MCF 10A (cell line): ENCODE measurements at regions of chr2 and their contacts with region 1.

Region 1: GRCh38 chr2:12716282-12717190 is at the start of gene TRIB2:
- DNase-seq: peak; percentile 82
- H3K4me3 Mint-ChIP-seq: peak within 1 kb of the TSS; percentile 95
- H3K27ac Mint-ChIP-seq: peak within 1 kb of the TSS; percentile 85
- H3K4me1 Mint-ChIP-seq: peaks cover 47% of the 10 kb centered on the region
- H3K27me3 Mint-ChIP-seq: no peaks in the 10 kb centered on the region
- CTCF ChIP-seq: no peak
- total RNA-seq, gene TRIB2: 12.9 and 14.3 TPM in 2 replicates

Region 2: DNA sequence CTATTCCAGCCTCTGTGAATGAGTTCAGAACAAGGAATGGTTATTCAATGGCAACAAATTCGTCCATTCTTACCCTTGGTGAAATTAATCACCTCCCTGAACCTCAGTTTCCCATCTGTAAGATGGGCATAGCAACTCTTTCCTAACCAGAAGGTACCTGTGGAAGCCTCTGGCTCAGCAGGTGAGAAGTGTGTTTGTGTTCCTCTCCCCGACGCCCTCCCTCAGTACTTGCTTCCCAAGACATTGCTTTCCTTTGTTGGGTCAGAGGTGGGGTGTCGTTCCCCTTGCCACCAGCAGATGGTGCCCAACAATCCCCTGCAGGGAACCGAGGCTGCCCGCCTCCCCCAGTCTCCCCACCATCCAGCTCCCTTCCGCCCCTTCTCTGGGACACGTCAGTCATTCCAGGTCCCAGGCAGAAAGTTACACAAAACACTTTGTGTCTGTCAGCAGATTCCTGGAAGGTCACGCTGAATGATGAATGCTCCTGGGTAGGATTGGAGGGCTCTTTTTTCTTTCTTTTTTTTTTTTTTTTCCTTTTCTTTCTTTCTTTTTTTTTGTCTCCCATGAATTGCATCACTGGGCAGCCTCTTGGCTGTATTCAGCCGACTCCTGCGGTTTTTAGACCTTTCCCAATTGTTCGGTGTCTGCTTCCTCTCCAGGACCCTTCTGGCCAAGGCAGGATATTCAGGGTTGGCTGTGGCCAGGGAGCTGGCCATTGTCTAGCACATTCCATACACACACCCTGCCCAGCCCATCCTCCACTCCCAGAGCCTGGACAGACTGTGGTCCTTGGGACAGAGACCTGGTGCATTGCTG is 852.8 kb before region 1 on chr2:
- CTCF ChIA-PET with region 1: interaction called, 42 read pairs
- POLR2A ChIA-PET with region 1: interaction called, 11 read pairs
- intact Hi-C with region 1: loop called (anchors 1 kb)
- DNase-seq: peak; percentile 96
- H3K4me3 Mint-ChIP-seq: peak overlapping the region; percentile 9
- H3K27ac Mint-ChIP-seq: peak overlapping the region; percentile 80
- H3K4me1 Mint-ChIP-seq: peaks cover 21% of the 10 kb centered on the region
- H3K27me3 Mint-ChIP-seq: no peaks in the 10 kb centered on the region
- CTCF ChIP-seq: peak; percentile 92

Region 3: GRCh38 chr2:12155303-12156051 is 561.1 kb before region 1 on chr2:
- CTCF ChIA-PET with region 1: no interaction called
- POLR2A ChIA-PET with region 1: no interaction called
- intact Hi-C with region 1: loop called (anchors 1 kb)
- DNase-seq: peak; percentile 87
- H3K4me3 Mint-ChIP-seq: no peak overlapping the region
- H3K27ac Mint-ChIP-seq: peak overlapping the region; percentile 43
- H3K4me1 Mint-ChIP-seq: peaks cover 28% of the 10 kb centered on the region
- H3K27me3 Mint-ChIP-seq: no peaks in the 10 kb centered on the region
- CTCF ChIP-seq: no peak

Region 4: GRCh38 chr2:12416600-12416999 is 299.9 kb before region 1 on chr2:
- CTCF ChIA-PET with region 1: no interaction called
- POLR2A ChIA-PET with region 1: no interaction called
- intact Hi-C with region 1: loop called (anchors 1 kb)
- DNase-seq: peak; percentile 38
- H3K4me3 Mint-ChIP-seq: no peak overlapping the region
- H3K27ac Mint-ChIP-seq: no peak overlapping the region
- H3K4me1 Mint-ChIP-seq: no peaks in the 10 kb centered on the region
- H3K27me3 Mint-ChIP-seq: no peaks in the 10 kb centered on the region
- CTCF ChIP-seq: peak; percentile 26

Region 5: GRCh38 chr2:12555012-12555645 is 161.4 kb before region 1 on chr2:
- CTCF ChIA-PET with region 1: interaction called, 7 read pairs
- POLR2A ChIA-PET with region 1: interaction called, 3 read pairs
- intact Hi-C with region 1: loop called (anchors 10 kb)
- DNase-seq: peak; percentile 52
- H3K4me3 Mint-ChIP-seq: no peak overlapping the region
- H3K27ac Mint-ChIP-seq: no peak overlapping the region
- H3K4me1 Mint-ChIP-seq: peaks cover 17% of the 10 kb centered on the region
- H3K27me3 Mint-ChIP-seq: no peaks in the 10 kb centered on the region
- CTCF ChIP-seq: no peak

Region 6: GRCh38 chr2:12931186-12931844 is 214.8 kb after region 1 on chr2:
- CTCF ChIA-PET with region 1: interaction called, 58 read pairs
- POLR2A ChIA-PET with region 1: interaction called, 7 read pairs
- intact Hi-C with region 1: loop called (anchors 1 kb)
- DNase-seq: peak; percentile 56
- H3K4me3 Mint-ChIP-seq: no peak overlapping the region
- H3K27ac Mint-ChIP-seq: no peak overlapping the region
- H3K4me1 Mint-ChIP-seq: peaks cover 19% of the 10 kb centered on the region
- H3K27me3 Mint-ChIP-seq: no peaks in the 10 kb centered on the region
- CTCF ChIP-seq: peak; percentile 87